CD4-positive, alpha-beta memory T cell (primary cell): ENCODE measurements at regions of chr3 and their contacts with region 1.

Region 1: GRCh38 chr3:32460031-32460749 is 42.5 kb downstream of the CMTM6 start:
- DNase-seq: peak; percentile 90 to 96 (median 95)
- H3K4me3 ChIP-seq: peak overlapping the region; percentile 25 to 47
- H3K4me3 Mint-ChIP-seq: peak overlapping the region in 5 of 8 donors; percentile 80 to 89 (median 85)
- H3K27ac ChIP-seq: peak overlapping the region; percentile 88
- H3K27ac Mint-ChIP-seq: no peak overlapping the region
- H3K4me1 ChIP-seq: peaks cover 84% of the 10 kb centered on the region
- H3K4me1 Mint-ChIP-seq: peaks cover 34 to 39% (median 37%) of the 10 kb centered on the region in 4 donors
- H3K27me3 ChIP-seq: no peaks in the 10 kb centered on the region
- H3K27me3 Mint-ChIP-seq: no peaks in the 10 kb centered on the region

Region 2: DNA sequence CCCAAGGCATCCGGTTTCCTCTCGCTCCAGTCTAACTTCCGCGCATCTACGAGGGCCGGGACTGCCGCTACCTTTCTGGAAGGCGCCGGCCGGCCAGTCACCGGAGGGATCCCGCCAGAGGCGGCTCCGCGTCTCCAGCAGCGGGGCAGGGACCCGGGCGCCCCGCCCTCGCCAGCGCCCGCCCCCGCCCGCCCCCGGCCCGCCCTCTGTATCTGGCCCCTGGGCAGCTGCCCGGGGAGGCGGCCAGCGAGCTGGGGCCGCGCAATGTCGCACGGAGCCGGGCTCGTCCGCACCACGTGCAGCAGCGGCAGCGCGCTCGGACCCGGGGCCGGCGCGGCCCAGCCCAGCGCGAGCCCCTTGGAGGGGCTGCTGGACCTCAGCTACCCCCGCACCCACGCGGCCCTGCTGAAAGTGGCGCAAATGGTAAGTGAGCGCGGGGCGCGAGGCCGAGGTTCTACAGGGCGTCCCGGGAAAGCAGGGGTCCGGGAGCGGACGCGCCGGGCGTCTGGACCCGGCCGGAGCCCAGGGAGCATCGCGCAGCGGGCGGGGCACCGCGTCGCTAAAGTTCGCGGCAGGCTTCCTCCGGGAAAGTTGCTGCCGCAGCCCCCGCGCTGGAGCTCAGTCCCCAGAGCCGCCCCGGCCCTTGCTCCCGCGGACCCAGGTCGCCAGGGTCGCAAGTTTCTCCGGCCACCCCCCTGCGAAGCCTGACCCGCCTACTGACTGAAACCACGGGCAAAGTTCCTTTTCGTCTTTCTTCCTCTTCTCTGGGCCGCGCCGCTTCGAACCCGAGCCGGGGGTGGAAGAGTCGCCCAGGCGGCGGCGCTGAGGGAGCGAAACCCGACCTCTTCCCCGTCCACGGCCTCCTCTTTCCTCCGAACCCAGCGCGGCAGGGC is 68.3 kb before region 1 on chr3 and contains the start of gene CMTM7:
- CTCF ChIA-PET with region 1: interaction called, 208 read pairs
- POLR2A ChIA-PET with region 1: interaction called, 37 read pairs
- intact Hi-C with region 1: loop called (anchors 1 kb)
- DNase-seq: peak; percentile 57 to 81 (median 67)
- H3K4me3 ChIP-seq: peak within 1 kb of the TSS; percentile 63 to 75
- H3K4me3 Mint-ChIP-seq: peak within 1 kb of the TSS; percentile 95 to 99 (median 97)
- H3K27ac ChIP-seq: peak within 1 kb of the TSS; percentile 76
- H3K27ac Mint-ChIP-seq: peak within 1 kb of the TSS; percentile 95 to 98 (median 97)
- H3K4me1 ChIP-seq: peaks cover 57% of the 10 kb centered on the region
- H3K4me1 Mint-ChIP-seq: peaks cover 36 to 64% (median 46%) of the 10 kb centered on the region in 4 donors
- H3K27me3 ChIP-seq: no peaks in the 10 kb centered on the region
- H3K27me3 Mint-ChIP-seq: no peaks in the 10 kb centered on the region
- total RNA-seq, gene CMTM7: 44.2 to 48.0 TPM

Region 3: GRCh38 chr3:32414520-32415202 is 45.5 kb before region 1 on chr3:
- CTCF ChIA-PET with region 1: interaction called, 10 read pairs
- POLR2A ChIA-PET with region 1: interaction called, 30 read pairs
- intact Hi-C with region 1: no loop called
- DNase-seq: peak; percentile 61 to 70 (median 65)
- H3K4me3 ChIP-seq: no peak overlapping the region
- H3K4me3 Mint-ChIP-seq: peak overlapping the region; percentile 45 to 73 (median 56)
- H3K27ac ChIP-seq: peak overlapping the region; percentile 58
- H3K27ac Mint-ChIP-seq: peak overlapping the region; percentile 88 to 98 (median 97)
- H3K4me1 ChIP-seq: peaks cover 76% of the 10 kb centered on the region
- H3K4me1 Mint-ChIP-seq: peaks cover 48 to 87% (median 64%) of the 10 kb centered on the region in 4 donors
- H3K27me3 ChIP-seq: no peaks in the 10 kb centered on the region
- H3K27me3 Mint-ChIP-seq: no peaks in the 10 kb centered on the region

Region 4: GRCh38 chr3:32428092-32429068 is 31.8 kb before region 1 on chr3:
- CTCF ChIA-PET with region 1: interaction called, 15 read pairs
- POLR2A ChIA-PET with region 1: interaction called, 415 read pairs
- intact Hi-C with region 1: loop called (anchors 1 kb)
- DNase-seq: peak; percentile 49 to 68 (median 53)
- H3K4me3 ChIP-seq: peak overlapping the region; percentile 4 to 21
- H3K4me3 Mint-ChIP-seq: peak overlapping the region; percentile 59 to 88 (median 78)
- H3K27ac ChIP-seq: peak overlapping the region; percentile 64
- H3K27ac Mint-ChIP-seq: peak overlapping the region; percentile 90 to 98 (median 97)
- H3K4me1 ChIP-seq: peaks cover 96% of the 10 kb centered on the region
- H3K4me1 Mint-ChIP-seq: peaks cover 69 to 98% (median 85%) of the 10 kb centered on the region in 4 donors
- H3K27me3 ChIP-seq: no peaks in the 10 kb centered on the region
- H3K27me3 Mint-ChIP-seq: no peaks in the 10 kb centered on the region

Region 5: DNA sequence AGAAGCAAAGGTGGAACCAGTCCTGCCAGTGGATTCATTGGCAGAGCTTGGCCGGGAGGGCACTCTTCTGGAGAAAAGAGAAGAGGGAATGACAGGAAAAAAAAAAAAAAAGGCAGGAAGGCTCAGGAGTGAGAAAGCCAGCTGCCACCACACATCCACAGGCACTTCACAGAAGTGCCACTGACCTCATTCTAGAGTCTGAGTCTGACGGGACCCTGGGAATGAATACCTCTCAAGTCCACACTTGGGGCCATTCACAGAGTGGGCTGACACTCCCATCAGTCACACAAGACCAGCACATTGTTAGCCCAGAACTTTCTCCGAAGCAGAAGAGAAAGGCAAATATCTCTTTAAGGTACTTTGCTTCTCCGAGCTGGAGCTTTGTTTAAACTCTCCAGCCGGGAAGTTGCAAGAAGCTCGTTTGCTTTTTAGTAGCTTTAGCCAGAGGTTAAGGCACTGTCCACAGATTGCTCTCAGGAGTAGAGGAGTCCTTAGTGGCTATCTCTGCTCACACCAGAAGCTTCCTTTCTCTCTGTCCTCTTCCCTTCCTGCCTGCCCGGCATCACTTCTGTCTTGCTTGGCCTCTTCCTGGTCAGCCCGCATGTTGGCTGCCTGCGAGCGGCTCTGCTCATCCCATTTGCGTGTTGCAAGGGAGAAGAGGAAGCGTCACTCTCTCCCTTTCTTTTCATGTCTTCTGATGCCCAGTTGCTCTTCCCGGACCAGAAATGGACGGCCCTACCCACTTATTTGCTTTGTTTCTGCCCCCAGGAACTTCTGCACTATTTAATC is 11.3 kb before region 1 on chr3:
- CTCF ChIA-PET with region 1: interaction called, 4 read pairs
- POLR2A ChIA-PET with region 1: interaction called, 13 read pairs
- intact Hi-C with region 1: no loop called
- DNase-seq: no peak
- H3K4me3 ChIP-seq: no peak overlapping the region
- H3K4me3 Mint-ChIP-seq: no peak overlapping the region
- H3K27ac ChIP-seq: no peak overlapping the region
- H3K27ac Mint-ChIP-seq: peak overlapping the region in 6 of 7 donors; percentile 12 to 76 (median 62)
- H3K4me1 ChIP-seq: peaks cover 38% of the 10 kb centered on the region
- H3K4me1 Mint-ChIP-seq: peaks cover 34 to 65% (median 47%) of the 10 kb centered on the region in 4 donors
- H3K27me3 ChIP-seq: no peaks in the 10 kb centered on the region
- H3K27me3 Mint-ChIP-seq: no peaks in the 10 kb centered on the region

Region 6: DNA sequence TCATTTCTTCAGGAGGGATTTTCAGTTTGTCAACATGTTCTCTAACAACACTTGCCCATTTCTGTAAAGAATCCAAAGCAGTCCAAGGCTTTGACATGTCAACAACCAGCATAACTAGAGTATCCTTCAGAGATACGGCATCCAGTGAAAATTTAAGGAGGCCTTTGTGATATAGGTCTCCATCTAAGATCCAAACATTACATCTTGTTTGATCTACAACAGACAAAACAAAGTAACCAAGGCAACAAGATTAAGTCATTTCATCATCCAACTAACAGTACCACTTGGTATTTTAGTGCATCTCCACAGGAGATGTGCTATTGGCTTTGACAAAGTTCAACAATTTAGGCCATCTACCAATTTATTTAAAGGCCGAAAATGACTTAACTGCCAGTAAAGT is 84.7 kb after region 1 on chr3:
- CTCF ChIA-PET with region 1: no interaction called
- POLR2A ChIA-PET with region 1: no interaction called
- intact Hi-C with region 1: no loop called
- DNase-seq: no peak
- H3K4me3 ChIP-seq: no peak overlapping the region
- H3K4me3 Mint-ChIP-seq: no peak overlapping the region
- H3K27ac ChIP-seq: no peak overlapping the region
- H3K27ac Mint-ChIP-seq: peak overlapping the region in 1 of 7 donors; percentile 65
- H3K4me1 ChIP-seq: no peaks in the 10 kb centered on the region
- H3K4me1 Mint-ChIP-seq: peaks cover 14 to 31% (median 17%) of the 10 kb centered on the region in 4 donors
- H3K27me3 ChIP-seq: no peaks in the 10 kb centered on the region
- H3K27me3 Mint-ChIP-seq: no peaks in the 10 kb centered on the region

Region 7: DNA sequence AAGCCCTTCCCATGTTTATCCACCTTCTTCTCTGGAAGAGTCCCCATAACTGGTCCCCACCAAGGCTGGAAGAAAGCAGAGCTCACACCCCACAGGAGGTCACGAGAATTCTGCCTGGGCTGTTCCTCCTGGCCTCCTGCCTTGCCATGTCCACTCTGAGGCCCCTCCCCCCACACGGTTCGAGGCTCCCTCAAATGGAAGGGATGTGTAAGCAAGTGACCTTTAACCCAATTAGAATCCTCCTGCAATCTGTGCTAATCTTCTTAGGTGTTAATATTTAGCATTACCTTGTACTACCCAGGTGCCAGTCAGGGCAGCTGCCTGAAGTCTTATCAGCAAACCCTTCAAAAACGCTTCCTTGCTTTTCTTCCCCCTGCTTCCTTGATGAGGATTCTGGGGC is 142.9 kb after region 1 on chr3:
- CTCF ChIA-PET with region 1: no interaction called
- POLR2A ChIA-PET with region 1: no interaction called
- intact Hi-C with region 1: no loop called
- DNase-seq: no peak
- H3K4me3 ChIP-seq: no peak overlapping the region
- H3K4me3 Mint-ChIP-seq: no peak overlapping the region
- H3K27ac ChIP-seq: no peak overlapping the region
- H3K27ac Mint-ChIP-seq: no peak overlapping the region
- H3K4me1 ChIP-seq: no peaks in the 10 kb centered on the region
- H3K4me1 Mint-ChIP-seq: no peaks in the 10 kb centered on the region
- H3K27me3 ChIP-seq: no peaks in the 10 kb centered on the region
- H3K27me3 Mint-ChIP-seq: peaks cover 6 to 9% of the 10 kb centered on the region in 2 donors

Region 8: GRCh38 chr3:32691847-32692246 is 231.7 kb after region 1 on chr3:
- CTCF ChIA-PET with region 1: no interaction called
- POLR2A ChIA-PET with region 1: no interaction called
- intact Hi-C with region 1: no loop called
- DNase-seq: no peak
- H3K4me3 ChIP-seq: no peak overlapping the region
- H3K4me3 Mint-ChIP-seq: no peak overlapping the region
- H3K27ac ChIP-seq: no peak overlapping the region
- H3K27ac Mint-ChIP-seq: no peak overlapping the region
- H3K4me1 ChIP-seq: peaks cover 16% of the 10 kb centered on the region
- H3K4me1 Mint-ChIP-seq: peaks cover 19 to 46% (median 24%) of the 10 kb centered on the region in 4 donors
- H3K27me3 ChIP-seq: no peaks in the 10 kb centered on the region
- H3K27me3 Mint-ChIP-seq: no peaks in the 10 kb centered on the region

Region 9: GRCh38 chr3:33322412-33322811 is 862.2 kb after region 1 on chr3:
- CTCF ChIA-PET with region 1: no interaction called
- POLR2A ChIA-PET with region 1: no interaction called
- intact Hi-C with region 1: no loop called
- DNase-seq: no peak
- H3K4me3 ChIP-seq: no peak overlapping the region
- H3K4me3 Mint-ChIP-seq: no peak overlapping the region
- H3K27ac ChIP-seq: no peak overlapping the region
- H3K27ac Mint-ChIP-seq: no peak overlapping the region
- H3K4me1 ChIP-seq: no peaks in the 10 kb centered on the region
- H3K4me1 Mint-ChIP-seq: peaks cover 0 to 6% (median 5%) of the 10 kb centered on the region in 4 donors
- H3K27me3 ChIP-seq: no peaks in the 10 kb centered on the region
- H3K27me3 Mint-ChIP-seq: peaks cover 16 to 23% of the 10 kb centered on the region in 2 donors